ENCODE measurements at regions of chr6 and their contacts with region 1.

Region 1: GRCh38 chr6:3913077-3913957 is 64.1 kb downstream of the FAM50B start:
- DNase-seq: peak; percentile 74 to 95
- H3K4me3 ChIP-seq: peak overlapping the region; percentile 49; the same call in 1 of the 2 replicates
- H3K27ac ChIP-seq: peak overlapping the region; percentile 100
- H3K4me1 ChIP-seq: peaks cover 45% of the 10 kb centered on the region
- H3K27me3 ChIP-seq: no peaks in the 10 kb centered on the region
- CTCF ChIP-seq: no peak

Region 2: GRCh38 chr6:3857468-3858456 is 55.6 kb before region 1 on chr6:
- CTCF ChIA-PET with region 1: no interaction called
- POLR2A ChIA-PET with region 1: no interaction called
- intact Hi-C with region 1: no loop called
- DNase-seq: no peak
- H3K4me3 ChIP-seq: no peak overlapping the region
- H3K27ac ChIP-seq: no peak overlapping the region
- H3K4me1 ChIP-seq: no peaks in the 10 kb centered on the region
- H3K27me3 ChIP-seq: no peaks in the 10 kb centered on the region
- CTCF ChIP-seq: no peak

Region 3: DNA sequence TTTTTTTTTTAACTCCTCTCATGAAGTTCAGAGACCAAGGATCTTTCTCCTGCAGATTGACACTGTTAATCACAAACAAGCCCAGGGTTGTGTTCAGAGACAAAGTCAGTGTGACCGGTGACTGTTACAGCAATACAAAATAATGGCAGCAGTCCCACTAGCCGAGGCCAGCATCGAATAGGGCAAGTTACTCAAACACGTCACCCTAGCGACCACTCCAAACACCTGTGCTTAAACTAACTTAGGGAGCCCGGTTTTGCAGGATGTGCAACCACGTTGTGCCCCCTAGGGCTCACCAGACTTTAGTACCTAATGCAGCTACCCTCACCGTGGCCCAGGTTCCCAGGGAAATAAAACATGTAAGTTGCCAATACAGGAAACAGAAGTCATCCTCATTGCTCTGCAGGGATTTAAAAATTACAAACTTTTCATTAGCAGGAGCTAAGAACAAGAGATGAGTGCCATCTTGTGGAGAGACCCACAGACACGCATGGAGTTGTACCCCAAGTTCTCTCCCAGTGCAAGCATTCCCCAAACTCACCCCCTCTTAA is 26.1 kb before region 1 on chr6:
- CTCF ChIA-PET with region 1: interaction called, 3 read pairs
- POLR2A ChIA-PET with region 1: interaction called, 3 read pairs
- intact Hi-C with region 1: loop called (anchors 1 kb)
- DNase-seq: peak; percentile 28 to 69
- H3K4me3 ChIP-seq: no peak overlapping the region
- H3K27ac ChIP-seq: no peak overlapping the region
- H3K4me1 ChIP-seq: peaks cover 40% of the 10 kb centered on the region
- H3K27me3 ChIP-seq: no peaks in the 10 kb centered on the region
- CTCF ChIP-seq: 0 out of 2 replicates have a peak, but pooled peaks have one; percentile 37

Region 4: GRCh38 chr6:3943331-3943765 is 30.0 kb after region 1 on chr6:
- CTCF ChIA-PET with region 1: no interaction called
- POLR2A ChIA-PET with region 1: no interaction called
- intact Hi-C with region 1: no loop called
- DNase-seq: no peak
- H3K4me3 ChIP-seq: no peak overlapping the region
- H3K27ac ChIP-seq: no peak overlapping the region
- H3K4me1 ChIP-seq: peaks cover 9% of the 10 kb centered on the region
- H3K27me3 ChIP-seq: no peaks in the 10 kb centered on the region
- CTCF ChIP-seq: no peak